Heart left ventricle (tissue), 16 donors: ENCODE measurements at regions of chr19 and their contacts with region 1.

Region 1: GRCh38 chr19:2887391-2887914 is 13.3 kb upstream of the ZNF57 start:
- DNase-seq: no peak
- ATAC-seq: peak; percentile 57 to 74 (median 73)
- H3K4me3 ChIP-seq: no peak overlapping the region
- H3K27ac ChIP-seq: no peak overlapping the region
- H3K4me1 ChIP-seq: peaks cover 0 to 6% (median 0%) of the 10 kb centered on the region in 12 donors
- H3K27me3 ChIP-seq: no peaks in the 10 kb centered on the region
- CTCF ChIP-seq: peak; percentile 56 to 77 (median 64)
- POLR2A ChIP-seq: no peak

Region 2: GRCh38 chr19:2610637-2611482 is 276.6 kb before region 1 on chr19:
- intact Hi-C with region 1: no loop called
- DNase-seq: peak; percentile 91 to 97 (median 94)
- ATAC-seq: peak; percentile 87 to 95 (median 92)
- H3K4me3 ChIP-seq: peak overlapping the region in 11 of 12 donors; percentile 28 to 59 (median 52)
- H3K27ac ChIP-seq: peak overlapping the region; percentile 73 to 90 (median 82)
- H3K4me1 ChIP-seq: peaks cover 0 to 32% (median 11%) of the 10 kb centered on the region in 12 donors
- H3K27me3 ChIP-seq: no peaks in the 10 kb centered on the region
- CTCF ChIP-seq: peak; percentile 96 to 100 (median 98)
- POLR2A ChIP-seq: peak in 1 of 2 donors; percentile 61

Region 3: GRCh38 chr19:2867025-2867991 is 20.1 kb before region 1 on chr19 and contains the start of gene ZNF556:
- intact Hi-C with region 1: no loop called
- DNase-seq: no peak
- ATAC-seq: peak in 3 of 4 donors; percentile 36 to 79 (median 42)
- H3K4me3 ChIP-seq: no peak within 1 kb of the TSS
- H3K27ac ChIP-seq: no peak within 1 kb of the TSS
- H3K4me1 ChIP-seq: no peaks in the 10 kb centered on the region
- H3K27me3 ChIP-seq: no peaks in the 10 kb centered on the region
- CTCF ChIP-seq: no peak
- POLR2A ChIP-seq: no peak
- total RNA-seq, gene ZNF556: 0.16 to 0.20 TPM in 2 of 9 donors, not detected in the others

Region 4: GRCh38 chr19:2944775-2945574 is 57.5 kb after region 1 on chr19 and contains the start of gene ZNF77:
- intact Hi-C with region 1: loop called in 4 of 10 experiments (anchors 5 to 10 kb)
- DNase-seq: peak; percentile 97 to 99 (median 99)
- ATAC-seq: peak; percentile 98 to 100 (median 99)
- H3K4me3 ChIP-seq: peak within 1 kb of the TSS; percentile 38 to 99 (median 80)
- H3K27ac ChIP-seq: peak within 1 kb of the TSS; percentile 33 to 97 (median 90)
- H3K4me1 ChIP-seq: peaks cover 0 to 29% (median 20%) of the 10 kb centered on the region in 12 donors
- H3K27me3 ChIP-seq: no peaks in the 10 kb centered on the region
- CTCF ChIP-seq: no peak
- POLR2A ChIP-seq: peak in 1 of 2 donors; percentile 19
- total RNA-seq, gene ZNF77: 1.8 to 3.2 (median 2.3) TPM

Region 5: GRCh38 chr19:3154957-3155736 is 267.7 kb after region 1 on chr19:
- intact Hi-C with region 1: loop called in 5 of 10 experiments (anchors 5 to 10 kb)
- DNase-seq: peak; percentile 86 to 93 (median 87)
- ATAC-seq: peak; percentile 91 to 96 (median 94)
- H3K4me3 ChIP-seq: peak overlapping the region in 5 of 12 donors; percentile 0 to 34 (median 18)
- H3K27ac ChIP-seq: peak overlapping the region in 11 of 12 donors; percentile 0 to 90 (median 77)
- H3K4me1 ChIP-seq: peaks cover 0 to 17% (median 6%) of the 10 kb centered on the region in 12 donors
- H3K27me3 ChIP-seq: peaks cover 0 to 4% (median 0%) of the 10 kb centered on the region in 9 donors
- CTCF ChIP-seq: no peak
- POLR2A ChIP-seq: no peak

Region 6: DNA sequence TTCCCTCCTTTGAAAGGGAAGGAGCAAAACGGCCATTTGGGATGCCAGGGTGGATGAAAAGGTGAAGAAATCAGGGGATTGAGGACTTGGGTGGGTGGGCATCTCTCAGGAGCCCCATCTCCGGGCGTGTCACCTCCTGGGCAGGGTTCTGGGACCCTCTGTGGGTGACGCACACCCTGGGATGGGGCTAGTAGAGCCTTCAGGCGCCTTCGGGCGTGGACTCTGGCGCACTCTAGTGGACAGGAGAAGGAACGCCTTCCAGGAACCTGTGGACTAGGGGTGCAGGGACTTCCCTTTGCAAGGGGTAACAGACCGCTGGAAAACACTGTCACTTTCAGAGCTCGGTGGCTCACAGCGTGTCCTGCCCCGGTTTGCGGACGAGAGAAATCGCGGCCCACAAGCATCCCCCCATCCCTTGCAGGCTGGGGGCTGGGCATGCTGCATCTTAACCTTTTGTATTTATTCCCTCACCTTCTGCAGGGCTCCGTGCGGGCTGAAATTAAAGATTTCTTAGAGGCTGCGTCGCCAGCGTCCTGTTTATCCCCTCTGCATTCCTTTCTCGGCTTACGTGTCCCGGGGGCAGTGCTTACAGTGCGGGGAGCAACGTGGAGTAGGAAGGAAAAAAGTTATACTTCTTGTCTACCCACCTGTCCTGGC is 275.9 kb after region 1 on chr19:
- intact Hi-C with region 1: loop called in 6 of 10 experiments (anchors 2 to 10 kb)
- DNase-seq: peak; percentile 51 to 86 (median 67)
- ATAC-seq: peak; percentile 65 to 91 (median 88)
- H3K4me3 ChIP-seq: no peak overlapping the region
- H3K27ac ChIP-seq: no peak overlapping the region
- H3K4me1 ChIP-seq: peaks cover 0 to 38% (median 0%) of the 10 kb centered on the region in 12 donors
- H3K27me3 ChIP-seq: no peaks in the 10 kb centered on the region
- CTCF ChIP-seq: peak; percentile 87 to 98 (median 94)
- POLR2A ChIP-seq: no peak